ENCODE measurements at regions of chr6 and their contacts with region 1.

Region 1: GRCh38 chr6:37051138-37052026 is 45.9 kb downstream of the FGD2 start:
- DNase-seq: peak; percentile 92
- ATAC-seq: peak; percentile 44
- H3K4me3 ChIP-seq: peak overlapping the region in 1 of 5 experiments; percentile 59
- H3K4me3 Mint-ChIP-seq: peak overlapping the region; percentile 71
- H3K27ac ChIP-seq: peak overlapping the region; percentile 91 to 98
- H3K27ac Mint-ChIP-seq: peak overlapping the region; percentile 85
- H3K4me1 ChIP-seq: peaks cover 45 to 54% of the 10 kb centered on the region in 2 donors
- H3K4me1 Mint-ChIP-seq: peaks cover 52% of the 10 kb centered on the region
- H3K27me3 ChIP-seq: no peaks in the 10 kb centered on the region
- H3K27me3 Mint-ChIP-seq: no peaks in the 10 kb centered on the region
- CTCF ChIP-seq: peak; percentile 91

Region 2: GRCh38 chr6:36594029-36594815 is 457.2 kb before region 1 on chr6 and contains the start of gene SRSF3:
- CTCF ChIA-PET with region 1: no interaction called
- POLR2A ChIA-PET with region 1: no interaction called
- intact Hi-C with region 1: loop called (anchors 1 kb)
- DNase-seq: peak; percentile 99
- ATAC-seq: peak; percentile 91
- H3K4me3 ChIP-seq: peak within 1 kb of the TSS; percentile 91 to 100 (median 97)
- H3K4me3 Mint-ChIP-seq: peak within 1 kb of the TSS; percentile 90
- H3K27ac ChIP-seq: peak within 1 kb of the TSS; percentile 93 to 99
- H3K27ac Mint-ChIP-seq: peak within 1 kb of the TSS; percentile 97
- H3K4me1 ChIP-seq: peaks cover 44 to 55% of the 10 kb centered on the region in 2 donors
- H3K4me1 Mint-ChIP-seq: peaks cover 48% of the 10 kb centered on the region
- H3K27me3 ChIP-seq: no peaks in the 10 kb centered on the region
- H3K27me3 Mint-ChIP-seq: no peaks in the 10 kb centered on the region
- CTCF ChIP-seq: peak; percentile 29
- total RNA-seq, gene SRSF3: 316 and 331 TPM in 2 replicates

Region 3: GRCh38 chr6:36765594-36766398 is 285.6 kb before region 1 on chr6:
- CTCF ChIA-PET with region 1: interaction called, 15 read pairs
- POLR2A ChIA-PET with region 1: no interaction called
- intact Hi-C with region 1: no loop called
- DNase-seq: peak; percentile 88
- ATAC-seq: peak; percentile 91
- H3K4me3 ChIP-seq: peak overlapping the region in 1 of 5 experiments; percentile 9
- H3K4me3 Mint-ChIP-seq: peak overlapping the region; percentile 60
- H3K27ac ChIP-seq: no peak overlapping the region
- H3K27ac Mint-ChIP-seq: peak overlapping the region; percentile 60
- H3K4me1 ChIP-seq: peaks cover 45 to 54% of the 10 kb centered on the region in 2 donors
- H3K4me1 Mint-ChIP-seq: peaks cover 41% of the 10 kb centered on the region
- H3K27me3 ChIP-seq: peaks cover 0 to 3% (median 0%) of the 10 kb centered on the region in 4 experiments
- H3K27me3 Mint-ChIP-seq: no peaks in the 10 kb centered on the region
- CTCF ChIP-seq: peak; percentile 92

Region 4: GRCh38 chr6:37029249-37029971 is 22.0 kb before region 1 on chr6:
- CTCF ChIA-PET with region 1: interaction called, 430 read pairs
- POLR2A ChIA-PET with region 1: interaction called, 14 read pairs
- intact Hi-C with region 1: loop called (anchors 2 kb)
- DNase-seq: peak; percentile 69
- ATAC-seq: peak; percentile 78
- H3K4me3 ChIP-seq: no peak overlapping the region
- H3K4me3 Mint-ChIP-seq: no peak overlapping the region
- H3K27ac ChIP-seq: no peak overlapping the region
- H3K27ac Mint-ChIP-seq: peak overlapping the region; percentile 84
- H3K4me1 ChIP-seq: peaks cover 0 to 8% of the 10 kb centered on the region in 2 donors
- H3K4me1 Mint-ChIP-seq: peaks cover 24% of the 10 kb centered on the region
- H3K27me3 ChIP-seq: no peaks in the 10 kb centered on the region
- H3K27me3 Mint-ChIP-seq: no peaks in the 10 kb centered on the region
- CTCF ChIP-seq: peak; percentile 80

Region 5: GRCh38 chr6:37068356-37069270 is 17.2 kb after region 1 on chr6:
- CTCF ChIA-PET with region 1: interaction called, 13 read pairs
- POLR2A ChIA-PET with region 1: no interaction called
- intact Hi-C with region 1: no loop called
- DNase-seq: no peak
- ATAC-seq: no peak
- H3K4me3 ChIP-seq: no peak overlapping the region
- H3K4me3 Mint-ChIP-seq: no peak overlapping the region
- H3K27ac ChIP-seq: no peak overlapping the region
- H3K27ac Mint-ChIP-seq: no peak overlapping the region
- H3K4me1 ChIP-seq: peaks cover 5 to 11% of the 10 kb centered on the region in 2 donors
- H3K4me1 Mint-ChIP-seq: peaks cover 17% of the 10 kb centered on the region
- H3K27me3 ChIP-seq: no peaks in the 10 kb centered on the region
- H3K27me3 Mint-ChIP-seq: no peaks in the 10 kb centered on the region
- CTCF ChIP-seq: no peak

Region 6: DNA sequence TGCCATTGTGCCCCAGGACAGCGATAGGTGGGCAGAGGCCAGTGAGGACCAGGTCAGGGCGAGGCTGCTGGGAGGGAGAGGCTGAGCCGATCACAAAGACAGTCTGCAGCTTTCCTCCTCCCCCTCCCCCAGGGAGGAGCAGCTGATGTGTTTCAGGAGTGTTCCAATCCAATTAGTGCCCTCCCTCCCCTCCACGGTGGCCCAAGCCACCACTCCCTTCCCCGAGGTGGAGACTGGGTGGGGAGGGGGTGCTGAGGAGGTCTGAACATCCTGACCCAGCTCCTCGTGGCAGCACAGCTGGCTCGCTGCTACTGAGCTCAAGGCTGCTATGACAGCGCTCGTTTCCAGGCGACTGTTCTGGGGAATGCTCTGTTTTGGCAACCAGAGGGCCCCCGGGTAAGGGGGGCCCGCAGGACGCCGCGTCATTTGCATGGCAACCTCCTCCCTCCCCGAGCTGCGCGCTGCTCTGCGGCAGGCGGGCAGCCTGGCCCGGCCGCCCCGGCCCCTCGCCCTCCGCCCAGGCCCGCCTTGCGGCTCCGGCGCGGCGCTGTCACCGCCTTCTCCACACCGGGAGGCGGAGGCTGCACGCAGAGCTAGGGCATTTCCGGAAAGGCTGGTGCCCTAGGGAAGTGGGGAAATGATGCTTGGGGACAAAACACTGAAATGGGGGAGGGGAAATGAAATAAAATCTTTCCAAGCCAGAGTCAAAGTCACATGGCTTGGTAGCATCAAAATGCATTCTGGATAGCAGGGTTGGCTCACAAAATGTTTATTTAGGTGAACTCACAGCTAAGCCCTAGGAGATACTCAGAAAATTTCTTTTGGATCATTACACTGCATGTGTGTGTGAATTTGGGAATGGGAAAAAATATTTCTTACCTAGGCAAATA is 51.1 kb after region 1 on chr6:
- CTCF ChIA-PET with region 1: interaction called, 17 read pairs
- POLR2A ChIA-PET with region 1: no interaction called
- intact Hi-C with region 1: loop called (anchors 1 kb)
- DNase-seq: peak; percentile 90
- ATAC-seq: peak; percentile 77
- H3K4me3 ChIP-seq: peak overlapping the region; percentile 2 to 64 (median 50)
- H3K4me3 Mint-ChIP-seq: peak overlapping the region; percentile 89
- H3K27ac ChIP-seq: peak overlapping the region; percentile 1 to 72
- H3K27ac Mint-ChIP-seq: peak overlapping the region; percentile 87
- H3K4me1 ChIP-seq: peaks cover 28 to 37% of the 10 kb centered on the region in 2 donors
- H3K4me1 Mint-ChIP-seq: peaks cover 36% of the 10 kb centered on the region
- H3K27me3 ChIP-seq: no peaks in the 10 kb centered on the region
- H3K27me3 Mint-ChIP-seq: no peaks in the 10 kb centered on the region
- CTCF ChIP-seq: no peak

Region 7: GRCh38 chr6:37160922-37161778 is 109.8 kb after region 1 on chr6:
- CTCF ChIA-PET with region 1: interaction called, 49 read pairs
- POLR2A ChIA-PET with region 1: interaction called, 6 read pairs
- intact Hi-C with region 1: no loop called
- DNase-seq: peak; percentile 74
- ATAC-seq: peak; percentile 84
- H3K4me3 ChIP-seq: no peak overlapping the region
- H3K4me3 Mint-ChIP-seq: peak overlapping the region; percentile 27
- H3K27ac ChIP-seq: peak overlapping the region; percentile 73 to 82
- H3K27ac Mint-ChIP-seq: peak overlapping the region; percentile 83
- H3K4me1 ChIP-seq: peaks cover 29 to 31% of the 10 kb centered on the region in 2 donors
- H3K4me1 Mint-ChIP-seq: peaks cover 31% of the 10 kb centered on the region
- H3K27me3 ChIP-seq: no peaks in the 10 kb centered on the region
- H3K27me3 Mint-ChIP-seq: no peaks in the 10 kb centered on the region
- CTCF ChIP-seq: no peak